WTC11 (cell line): ENCODE measurements at regions of chr1 and their contacts with region 1.

Region 1: GRCh38 chr1:78114034-78114956 is 68.5 kb downstream of the GIPC2 start:
- DNase-seq: peak; percentile 32
- ATAC-seq: peak; percentile 90
- H3K4me3 Mint-ChIP-seq: no peak overlapping the region
- H3K27ac Mint-ChIP-seq: no peak overlapping the region
- H3K4me1 Mint-ChIP-seq: no peaks in the 10 kb centered on the region
- H3K27me3 Mint-ChIP-seq: no peaks in the 10 kb centered on the region
- CTCF ChIP-seq: peak; percentile 57; the same call in 1 of the 2 replicates

Region 2: GRCh38 chr1:77632216-77632615 is 482.1 kb before region 1 on chr1:
- CTCF ChIA-PET with region 1: no interaction called
- POLR2A ChIA-PET with region 1: no interaction called
- DNase-seq: no peak
- ATAC-seq: no peak
- H3K4me3 Mint-ChIP-seq: no peak overlapping the region
- H3K27ac Mint-ChIP-seq: no peak overlapping the region
- H3K4me1 Mint-ChIP-seq: peaks cover 18% of the 10 kb centered on the region
- H3K27me3 Mint-ChIP-seq: no peaks in the 10 kb centered on the region
- CTCF ChIP-seq: no peak

Region 3: DNA sequence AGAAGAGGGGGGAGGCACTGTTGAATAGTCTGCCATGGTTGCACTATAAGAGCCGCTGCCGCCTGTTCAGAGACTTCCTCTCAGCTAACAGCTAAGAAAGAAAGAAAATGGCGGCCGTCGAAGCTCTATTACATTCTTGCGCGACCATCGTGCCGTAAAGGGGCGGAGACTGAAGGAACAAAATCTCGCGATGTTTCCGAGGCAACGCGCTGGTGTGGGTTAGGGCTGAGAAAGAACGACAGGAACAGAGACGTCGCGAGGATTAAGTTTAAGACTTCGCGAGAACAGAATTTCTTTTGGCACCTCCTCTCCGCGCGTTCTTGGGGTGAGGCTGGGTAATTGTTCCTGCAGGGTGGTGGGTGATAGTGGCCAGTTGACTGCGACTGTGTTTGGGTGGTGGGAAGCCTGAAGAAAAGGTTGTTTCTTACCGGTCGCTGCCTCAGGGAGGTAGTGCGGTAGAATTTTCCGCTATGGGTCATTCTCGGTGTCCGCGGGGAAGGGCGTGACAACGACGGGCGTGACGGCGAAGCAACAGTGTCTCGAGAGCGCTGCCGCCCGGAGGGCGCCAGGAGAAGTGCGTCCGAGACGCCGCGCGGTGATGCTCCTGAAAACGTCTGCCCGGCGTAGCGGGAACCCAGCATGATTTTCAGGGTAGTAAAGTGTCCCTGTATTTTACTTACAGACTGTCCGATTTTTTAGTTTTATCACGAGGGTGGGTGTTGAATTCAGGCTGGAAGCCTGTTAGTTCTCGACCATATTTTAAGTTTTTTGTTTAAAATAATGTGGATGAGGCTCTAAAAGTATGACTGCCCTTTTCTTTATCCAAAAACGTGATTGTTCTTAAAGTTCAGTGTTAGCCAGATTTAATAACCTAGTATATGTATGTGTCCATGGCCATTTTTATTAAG is 135.1 kb before region 1 on chr1 and contains the start of gene FUBP1:
- CTCF ChIA-PET with region 1: interaction called, 14 read pairs
- POLR2A ChIA-PET with region 1: no interaction called
- DNase-seq: peak; percentile 95
- ATAC-seq: peak; percentile 92
- H3K4me3 Mint-ChIP-seq: no peak within 1 kb of the TSS
- H3K27ac Mint-ChIP-seq: no peak within 1 kb of the TSS
- H3K4me1 Mint-ChIP-seq: peaks cover 54% of the 10 kb centered on the region
- H3K27me3 Mint-ChIP-seq: no peaks in the 10 kb centered on the region
- CTCF ChIP-seq: 0 out of 2 replicates have a peak, but pooled peaks have one; percentile 19
- total RNA-seq, gene FUBP1: 175 to 208 TPM (median 176 TPM) in 3 replicates

Region 4: DNA sequence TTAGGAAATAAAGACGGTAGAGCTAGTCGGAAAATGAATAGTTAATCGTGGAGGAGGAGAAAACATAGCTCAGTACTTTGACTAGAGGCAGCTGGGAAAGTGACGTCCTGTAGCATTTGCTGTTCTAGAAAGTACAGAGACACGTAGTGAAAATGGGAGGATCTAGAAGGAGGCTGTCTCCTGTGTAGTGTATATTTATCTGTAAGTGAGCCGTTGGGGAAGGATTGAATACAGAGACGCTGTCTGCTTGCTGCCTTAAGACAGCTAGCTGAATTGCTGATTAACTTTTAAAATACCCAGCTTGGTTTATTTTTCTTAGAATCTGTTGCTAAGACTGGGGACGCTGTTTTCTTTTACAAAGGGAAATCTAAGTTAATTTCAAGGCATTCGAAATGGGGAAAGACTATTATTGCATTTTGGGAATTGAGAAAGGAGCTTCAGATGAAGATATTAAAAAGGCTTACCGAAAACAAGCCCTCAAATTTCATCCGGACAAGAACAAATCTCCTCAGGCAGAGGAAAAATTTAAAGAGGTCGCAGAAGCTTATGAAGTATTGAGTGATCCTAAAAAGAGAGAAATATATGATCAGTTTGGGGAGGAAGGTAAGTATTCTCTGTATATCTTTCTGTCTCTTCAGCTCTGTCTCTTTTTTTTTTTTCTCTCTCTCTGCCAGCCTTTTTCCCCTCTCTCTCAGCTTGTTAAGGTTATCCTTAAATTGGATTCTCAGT is 109.4 kb before region 1 on chr1 and contains the start of gene DNAJB4:
- CTCF ChIA-PET with region 1: interaction called, 14 read pairs
- POLR2A ChIA-PET with region 1: no interaction called
- DNase-seq: no peak
- ATAC-seq: peak; percentile 91
- H3K4me3 Mint-ChIP-seq: peak within 1 kb of the TSS; percentile 70
- H3K27ac Mint-ChIP-seq: peak within 1 kb of the TSS; percentile 96
- H3K4me1 Mint-ChIP-seq: peaks cover 40% of the 10 kb centered on the region
- H3K27me3 Mint-ChIP-seq: no peaks in the 10 kb centered on the region
- CTCF ChIP-seq: no peak
- total RNA-seq, gene DNAJB4: 23.4 to 26.5 TPM (median 26.0 TPM) in 3 replicates

Region 5: GRCh38 chr1:78045926-78046778 is 68.1 kb before region 1 on chr1 and contains the start of gene GIPC2:
- CTCF ChIA-PET with region 1: interaction called, 16 read pairs
- POLR2A ChIA-PET with region 1: no interaction called
- DNase-seq: peak; percentile 60
- ATAC-seq: peak; percentile 71
- H3K4me3 Mint-ChIP-seq: peak within 1 kb of the TSS; percentile 87
- H3K27ac Mint-ChIP-seq: no peak within 1 kb of the TSS; the same call in 1 of the 2 replicates
- H3K4me1 Mint-ChIP-seq: peaks cover 33% of the 10 kb centered on the region
- H3K27me3 Mint-ChIP-seq: peaks cover 47% of the 10 kb centered on the region
- CTCF ChIP-seq: no peak
- total RNA-seq, gene GIPC2: 0.83 to 1.6 TPM (median 1.1 TPM) in 3 replicates

Region 6: GRCh38 chr1:78101514-78101913 is 12.8 kb before region 1 on chr1:
- CTCF ChIA-PET with region 1: interaction called, 12 read pairs
- POLR2A ChIA-PET with region 1: no interaction called
- DNase-seq: no peak
- ATAC-seq: peak; percentile 60
- H3K4me3 Mint-ChIP-seq: no peak overlapping the region
- H3K27ac Mint-ChIP-seq: peak overlapping the region; percentile 22; the same call in 1 of the 2 replicates
- H3K4me1 Mint-ChIP-seq: peaks cover 10% of the 10 kb centered on the region
- H3K27me3 Mint-ChIP-seq: no peaks in the 10 kb centered on the region
- CTCF ChIP-seq: no peak

Region 7: GRCh38 chr1:78156805-78157521 is 42.7 kb after region 1 on chr1:
- CTCF ChIA-PET with region 1: no interaction called
- POLR2A ChIA-PET with region 1: no interaction called
- DNase-seq: no peak
- ATAC-seq: no peak
- H3K4me3 Mint-ChIP-seq: no peak overlapping the region
- H3K27ac Mint-ChIP-seq: no peak overlapping the region
- H3K4me1 Mint-ChIP-seq: peaks cover 14% of the 10 kb centered on the region
- H3K27me3 Mint-ChIP-seq: peaks cover 10% of the 10 kb centered on the region
- CTCF ChIP-seq: no peak